Activated CD8-positive, alpha-beta memory T cell treated with anti-CD3 and anti-CD28 coated beads, Interleukin-2, amount 10 ng/mL, durations not matched to agents 7 days and 5 days (primary cell): ENCODE measurements at regions of chr10 and their contacts with region 1.

Region 1: GRCh38 chr10:69408318-69409175 is 8.2 kb downstream of the TACR2 start:
- DNase-seq: peak; percentile 94
- ATAC-seq: peak; percentile 94
- H3K4me3 Mint-ChIP-seq: peak overlapping the region; percentile 54
- H3K27ac Mint-ChIP-seq: peak overlapping the region; percentile 77
- H3K4me1 Mint-ChIP-seq: peaks cover 18% of the 10 kb centered on the region
- H3K27me3 Mint-ChIP-seq: no peaks in the 10 kb centered on the region

Region 2: DNA sequence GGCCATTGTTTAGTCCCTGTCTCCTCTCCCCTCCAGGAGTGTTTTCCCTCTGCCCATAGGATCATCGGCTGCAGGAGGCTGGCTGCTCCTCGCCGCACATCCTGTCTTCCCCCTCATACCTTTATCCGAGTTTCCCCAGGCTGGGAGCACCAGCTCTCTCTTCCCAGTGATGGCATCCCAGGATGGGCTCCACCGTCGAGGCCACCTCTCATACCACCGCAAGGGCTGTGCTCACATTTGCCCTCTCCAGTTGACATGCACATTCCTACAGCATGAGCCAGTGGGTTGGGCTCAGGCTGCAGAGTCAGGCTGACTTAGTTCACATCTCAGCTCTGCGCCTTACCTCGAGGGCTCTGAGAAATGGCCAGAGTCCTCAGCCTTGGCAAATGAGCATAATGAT is 176.3 kb before region 1 on chr10:
- CTCF ChIA-PET with region 1: interaction called, 44 read pairs
- DNase-seq: no peak
- ATAC-seq: no peak
- H3K4me3 Mint-ChIP-seq: no peak overlapping the region
- H3K27ac Mint-ChIP-seq: peak overlapping the region; percentile 39
- H3K4me1 Mint-ChIP-seq: peaks cover 65% of the 10 kb centered on the region
- H3K27me3 Mint-ChIP-seq: no peaks in the 10 kb centered on the region

Region 3: GRCh38 chr10:69318106-69318866 is 90.3 kb before region 1 on chr10:
- CTCF ChIA-PET with region 1: interaction called, 11 read pairs
- DNase-seq: peak; percentile 95
- ATAC-seq: peak; percentile 89
- H3K4me3 Mint-ChIP-seq: peak overlapping the region; percentile 97
- H3K27ac Mint-ChIP-seq: peak overlapping the region; percentile 93
- H3K4me1 Mint-ChIP-seq: peaks cover 48% of the 10 kb centered on the region
- H3K27me3 Mint-ChIP-seq: no peaks in the 10 kb centered on the region

Region 4: DNA sequence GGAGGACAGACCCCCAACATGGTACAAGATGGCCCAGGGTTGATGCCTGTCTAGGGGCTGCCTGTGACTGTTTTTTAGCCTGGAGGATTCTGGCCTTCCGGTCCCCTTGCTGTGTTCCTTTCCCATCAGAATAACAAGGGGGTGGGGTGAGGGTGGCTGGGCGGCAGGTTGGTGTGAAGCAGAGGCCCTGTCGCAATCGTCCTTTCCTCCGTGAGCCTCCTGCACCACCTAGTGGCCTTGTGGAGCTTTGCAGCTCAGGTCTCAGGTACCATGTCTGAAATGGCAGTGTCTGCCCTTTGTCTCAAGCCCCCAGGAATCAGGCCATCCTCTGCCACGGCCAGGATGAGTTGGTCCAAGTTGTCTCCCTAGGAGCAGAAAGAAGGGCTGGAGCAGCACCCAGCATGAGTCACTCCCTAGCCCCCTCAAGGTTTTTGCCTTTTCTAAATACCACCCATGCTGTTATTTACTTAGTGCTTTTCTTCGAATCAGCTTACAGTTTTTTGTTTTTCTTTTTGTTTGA is 16.0 kb before region 1 on chr10:
- CTCF ChIA-PET with region 1: interaction called, 24 read pairs
- DNase-seq: peak; percentile 90
- ATAC-seq: peak; percentile 96
- H3K4me3 Mint-ChIP-seq: no peak overlapping the region
- H3K27ac Mint-ChIP-seq: peak overlapping the region; percentile 74
- H3K4me1 Mint-ChIP-seq: peaks cover 15% of the 10 kb centered on the region
- H3K27me3 Mint-ChIP-seq: no peaks in the 10 kb centered on the region

Region 5: DNA sequence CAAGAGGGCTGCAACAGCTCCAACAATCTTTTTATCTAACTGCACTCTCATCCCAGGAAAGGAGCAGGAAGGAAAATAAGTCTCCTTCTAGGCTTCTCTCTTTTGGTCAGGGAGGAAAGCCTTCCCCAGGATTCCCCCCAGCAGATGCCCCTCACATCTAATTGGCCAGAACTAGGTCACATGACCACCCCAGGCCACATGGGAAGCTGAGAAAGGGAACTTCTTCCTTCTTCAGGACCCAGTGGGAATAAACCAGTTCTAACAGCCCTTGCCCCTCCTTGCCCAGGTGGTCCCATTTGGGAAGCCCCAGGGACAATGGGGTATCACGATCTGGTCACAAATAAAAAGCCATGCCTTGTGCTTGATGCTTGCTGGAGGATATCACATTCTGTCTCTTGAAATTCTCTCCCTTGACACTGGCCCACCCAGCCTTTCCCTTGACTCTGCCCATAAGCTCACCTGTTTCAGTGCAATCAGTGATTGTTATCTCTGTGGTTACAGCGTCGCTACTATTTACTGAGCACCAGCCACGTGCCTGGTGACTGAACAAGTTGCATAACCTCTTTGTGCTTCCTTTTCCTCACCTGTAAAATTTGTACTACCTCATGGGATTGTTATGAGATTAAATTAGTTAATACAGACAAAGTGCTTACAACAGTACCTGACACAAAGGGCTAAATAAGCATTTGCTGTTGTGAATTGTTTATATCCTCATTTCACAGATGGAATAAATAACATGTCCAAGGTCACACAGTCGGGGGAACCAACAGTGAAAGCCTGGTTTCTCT is 17.2 kb after region 1 on chr10:
- CTCF ChIA-PET with region 1: interaction called, 12 read pairs
- DNase-seq: no peak
- ATAC-seq: peak; percentile 28
- H3K4me3 Mint-ChIP-seq: no peak overlapping the region
- H3K27ac Mint-ChIP-seq: no peak overlapping the region
- H3K4me1 Mint-ChIP-seq: peaks cover 40% of the 10 kb centered on the region
- H3K27me3 Mint-ChIP-seq: no peaks in the 10 kb centered on the region

Region 6: DNA sequence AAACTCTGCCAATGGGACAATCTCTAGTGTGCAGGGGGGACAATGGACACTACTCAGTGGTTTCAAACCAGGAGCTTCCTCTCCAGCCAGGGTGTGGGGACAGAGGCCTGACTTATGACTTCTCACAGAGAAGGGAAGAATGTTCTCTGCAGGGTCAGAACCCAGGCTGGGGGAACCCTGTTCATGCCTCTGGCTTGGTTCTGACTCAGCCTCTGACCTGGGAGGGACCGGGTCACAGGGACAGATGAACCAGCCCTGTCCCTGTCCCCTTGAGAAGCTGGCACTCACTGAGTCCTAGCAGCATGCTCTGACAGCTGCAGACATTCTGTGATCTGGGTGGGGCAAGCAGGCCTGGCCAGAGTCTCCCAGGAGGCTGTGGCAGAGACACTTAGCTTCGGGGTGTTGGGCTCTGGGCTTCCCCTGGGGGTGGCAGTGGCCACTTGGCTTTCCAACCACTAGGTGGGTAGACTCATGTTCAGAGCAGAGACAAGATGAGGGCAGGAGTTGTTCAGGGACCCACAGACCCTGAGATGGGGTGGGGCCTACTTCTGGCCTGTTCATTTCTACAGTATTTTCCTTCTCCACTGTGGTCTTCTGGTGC is 56.4 kb after region 1 on chr10:
- CTCF ChIA-PET with region 1: interaction called, 10 read pairs
- DNase-seq: peak; percentile 51
- ATAC-seq: peak; percentile 61
- H3K4me3 Mint-ChIP-seq: no peak overlapping the region
- H3K27ac Mint-ChIP-seq: peak overlapping the region; percentile 88
- H3K4me1 Mint-ChIP-seq: peaks cover 53% of the 10 kb centered on the region
- H3K27me3 Mint-ChIP-seq: no peaks in the 10 kb centered on the region

Region 7: GRCh38 chr10:69600761-69601330 is 192.3 kb after region 1 on chr10:
- CTCF ChIA-PET with region 1: no interaction called
- DNase-seq: no peak
- ATAC-seq: no peak
- H3K4me3 Mint-ChIP-seq: no peak overlapping the region
- H3K27ac Mint-ChIP-seq: no peak overlapping the region
- H3K4me1 Mint-ChIP-seq: no peaks in the 10 kb centered on the region
- H3K27me3 Mint-ChIP-seq: peaks cover 38% of the 10 kb centered on the region